PC-3 (cell line): ENCODE measurements at regions of chr15 and their contacts with region 1.

Region 1: DNA sequence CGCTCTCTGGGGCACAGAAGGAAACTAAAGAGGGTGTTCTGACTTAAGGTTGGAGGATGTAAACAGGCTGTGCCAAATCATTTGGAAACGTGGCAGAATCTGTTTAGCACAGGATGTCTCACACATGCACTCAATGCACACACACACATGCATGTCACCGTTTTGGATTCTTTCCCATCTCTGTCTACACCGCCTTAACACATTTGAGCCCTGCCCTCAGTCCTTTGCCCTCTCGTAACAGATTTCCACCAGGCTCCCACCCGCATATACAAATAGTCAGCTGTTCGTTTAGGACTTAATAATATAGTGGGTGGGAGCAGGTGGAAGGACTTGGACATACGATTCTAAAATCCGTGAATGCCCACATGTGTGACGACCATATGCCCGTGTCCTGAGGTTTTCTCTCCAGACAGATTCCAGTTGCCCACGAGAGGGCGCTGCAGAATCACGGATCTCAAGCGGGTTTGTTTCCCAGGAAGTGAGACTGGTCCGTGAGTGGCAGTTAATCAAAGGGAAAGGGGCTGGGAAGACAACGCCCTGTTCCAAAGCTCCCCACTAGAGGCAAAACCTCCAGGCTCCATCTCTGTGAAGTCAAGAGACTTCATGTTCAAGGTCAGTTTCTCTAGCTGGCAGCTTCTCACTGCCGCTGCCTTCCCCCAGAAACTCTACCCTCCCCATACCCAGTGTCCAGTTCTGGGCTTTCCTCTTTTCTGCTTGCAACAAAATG is 44.5 kb downstream of the NOX5 start:
- DNase-seq: peak; percentile 94
- ATAC-seq: peak; percentile 51
- H3K4me3 ChIP-seq: no peak overlapping the region
- H3K27ac ChIP-seq: peak overlapping the region; percentile 26; the same call in 1 of the 2 replicates
- H3K4me1 ChIP-seq: peaks cover 53% of the 10 kb centered on the region
- H3K27me3 ChIP-seq: no peaks in the 10 kb centered on the region
- CTCF ChIP-seq: peak; percentile 91

Region 2: DNA sequence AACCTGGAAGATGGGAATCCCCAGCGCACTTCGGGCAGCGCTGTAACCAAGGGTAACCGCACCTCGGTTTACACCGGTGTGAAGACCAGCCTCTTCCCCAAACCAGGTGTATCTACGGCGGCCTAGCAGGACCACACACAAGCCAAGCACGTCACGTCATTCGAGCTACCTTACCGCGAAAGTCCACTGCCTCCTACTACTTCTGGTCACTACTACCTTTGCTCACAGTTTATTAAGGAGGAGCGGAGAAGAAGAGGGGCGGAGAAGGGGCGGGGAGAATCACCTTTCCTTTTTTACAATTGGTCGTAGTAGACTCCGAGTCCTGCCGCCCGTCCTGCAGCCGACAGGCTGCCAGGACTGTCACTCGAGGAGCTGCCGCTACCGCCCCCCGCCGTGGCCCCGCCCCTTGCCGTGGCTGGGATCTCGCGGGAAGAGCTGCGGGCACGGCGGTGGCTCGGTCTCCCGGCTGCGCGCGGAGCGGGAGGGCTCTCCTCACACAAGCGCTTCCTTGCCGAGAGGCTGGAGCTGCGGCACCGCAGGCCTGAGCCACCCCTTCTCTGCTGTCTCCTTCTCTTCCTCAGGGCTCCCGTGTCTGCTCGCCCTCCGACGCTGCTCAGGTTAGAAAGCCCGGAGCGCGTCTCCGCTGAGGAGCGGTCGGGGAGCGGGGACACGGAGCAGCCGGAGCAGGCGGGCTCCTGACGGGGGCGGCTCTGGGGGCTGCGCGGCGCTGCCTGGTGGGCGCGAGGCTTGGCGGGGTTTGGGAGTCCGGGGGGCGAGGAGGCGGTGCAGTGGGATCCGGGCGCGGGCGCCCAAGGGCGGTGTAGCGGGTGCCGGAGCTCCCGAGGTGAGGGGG is 101.4 kb after region 1 on chr15 and contains the start of gene GLCE:
- CTCF ChIA-PET with region 1: no interaction called
- POLR2A ChIA-PET with region 1: no interaction called
- intact Hi-C with region 1: loop called (anchors 2 kb)
- DNase-seq: peak; percentile 97
- ATAC-seq: peak; percentile 91
- H3K4me3 ChIP-seq: peak within 1 kb of the TSS; percentile 93
- H3K27ac ChIP-seq: peak within 1 kb of the TSS; percentile 4; the same call in 1 of the 2 replicates
- H3K4me1 ChIP-seq: peaks cover 21% of the 10 kb centered on the region
- H3K27me3 ChIP-seq: no peaks in the 10 kb centered on the region
- CTCF ChIP-seq: no peak
- total RNA-seq, gene GLCE: 11.1 and 15.4 TPM in 2 replicates

Region 3: DNA sequence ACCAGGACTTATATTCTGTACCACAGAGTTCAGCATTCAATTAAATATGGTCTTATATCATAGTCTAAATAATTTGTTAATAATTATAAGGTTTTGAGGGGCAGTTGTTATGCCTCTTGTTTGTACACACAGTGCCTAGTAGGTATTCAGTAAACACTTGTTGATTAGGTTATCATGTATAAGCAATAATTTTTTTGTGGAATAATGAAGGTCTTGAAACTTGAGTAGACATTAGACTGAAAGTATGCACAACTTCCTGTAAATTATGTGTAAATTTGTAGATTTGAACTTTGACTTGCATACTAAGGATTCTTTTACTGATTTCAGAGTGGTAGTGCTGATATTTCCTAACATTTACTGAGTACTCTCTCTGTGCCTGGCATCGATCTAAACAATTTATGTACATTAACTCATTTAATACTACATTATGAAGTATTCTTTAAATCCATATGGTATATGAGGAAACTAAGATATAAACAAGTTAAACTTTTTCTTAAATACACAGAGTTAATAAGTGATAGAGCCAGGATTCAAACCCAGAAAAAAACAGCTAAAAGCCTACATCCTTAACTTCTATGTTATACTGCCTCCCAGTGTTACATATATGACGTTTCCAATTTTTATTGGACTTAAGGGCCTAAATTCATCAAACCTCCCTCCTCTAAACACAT is 166.5 kb after region 1 on chr15:
- CTCF ChIA-PET with region 1: interaction called, 4 read pairs
- POLR2A ChIA-PET with region 1: no interaction called
- intact Hi-C with region 1: loop called (anchors 1 kb)
- DNase-seq: peak; percentile 52
- ATAC-seq: peak; percentile 40; the same call in 1 of the 2 replicates
- H3K4me3 ChIP-seq: no peak overlapping the region
- H3K27ac ChIP-seq: no peak overlapping the region
- H3K4me1 ChIP-seq: peaks cover 4% of the 10 kb centered on the region; the same call in 1 of the 2 replicates
- H3K27me3 ChIP-seq: no peaks in the 10 kb centered on the region
- CTCF ChIP-seq: peak; percentile 58

Region 4: GRCh38 chr15:69265347-69265955 is 206.5 kb after region 1 on chr15:
- CTCF ChIA-PET with region 1: interaction called, 3 read pairs
- POLR2A ChIA-PET with region 1: no interaction called
- intact Hi-C with region 1: loop called (anchors 1 kb)
- DNase-seq: peak; percentile 58
- ATAC-seq: no peak
- H3K4me3 ChIP-seq: no peak overlapping the region
- H3K27ac ChIP-seq: no peak overlapping the region
- H3K4me1 ChIP-seq: no peaks in the 10 kb centered on the region
- H3K27me3 ChIP-seq: no peaks in the 10 kb centered on the region
- CTCF ChIP-seq: peak; percentile 75

Region 5: DNA sequence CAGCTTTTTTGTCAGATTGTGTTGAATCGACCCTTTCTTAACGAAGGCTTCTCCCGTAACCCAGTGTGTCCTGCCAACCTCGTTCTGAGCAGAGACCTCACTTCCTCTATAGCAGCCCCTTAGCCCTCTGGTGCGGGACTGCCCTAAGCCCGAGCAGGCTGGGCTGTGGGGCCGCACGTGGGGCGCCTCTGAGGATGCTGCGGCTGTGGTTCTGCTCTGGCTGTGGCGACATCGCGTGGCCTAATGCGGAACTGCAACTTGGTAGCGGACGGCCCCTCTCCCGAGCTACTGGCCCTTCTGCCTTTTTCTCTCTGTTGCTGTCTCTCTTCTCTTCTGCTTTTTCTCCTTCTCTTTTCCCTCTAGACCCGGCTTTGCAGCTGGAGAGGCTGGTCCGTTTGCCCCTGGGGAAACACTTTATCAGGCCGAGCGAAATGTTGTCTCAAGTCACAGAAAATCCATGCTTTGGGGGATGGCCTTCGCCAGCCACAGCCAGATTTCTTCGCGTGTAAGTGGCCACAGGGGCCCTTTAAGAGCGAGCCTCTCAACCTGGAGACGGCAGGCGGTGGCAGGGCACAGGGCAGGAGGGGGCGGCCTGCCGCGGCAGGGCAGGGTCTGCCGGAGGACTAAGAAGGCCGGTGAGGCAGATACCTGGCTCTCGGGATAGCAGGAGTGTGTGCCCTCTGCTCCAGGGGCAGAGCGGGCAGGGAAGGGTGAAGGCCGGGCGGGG is 335.7 kb after region 1 on chr15:
- CTCF ChIA-PET with region 1: no interaction called
- POLR2A ChIA-PET with region 1: no interaction called
- intact Hi-C with region 1: loop called (anchors 5 kb)
- DNase-seq: peak; percentile 78
- ATAC-seq: peak; percentile 72
- H3K4me3 ChIP-seq: no peak overlapping the region
- H3K27ac ChIP-seq: no peak overlapping the region
- H3K4me1 ChIP-seq: peaks cover 39% of the 10 kb centered on the region
- H3K27me3 ChIP-seq: no peaks in the 10 kb centered on the region
- CTCF ChIP-seq: peak; percentile 91

Region 6: GRCh38 chr15:69535101-69535638 is 476.2 kb after region 1 on chr15:
- CTCF ChIA-PET with region 1: no interaction called
- POLR2A ChIA-PET with region 1: no interaction called
- intact Hi-C with region 1: loop called (anchors 10 kb)
- DNase-seq: peak; percentile 70
- ATAC-seq: peak; percentile 84
- H3K4me3 ChIP-seq: no peak overlapping the region
- H3K27ac ChIP-seq: no peak overlapping the region
- H3K4me1 ChIP-seq: peaks cover 9% of the 10 kb centered on the region; the same call in 1 of the 2 replicates
- H3K27me3 ChIP-seq: no peaks in the 10 kb centered on the region
- CTCF ChIP-seq: no peak